HCT116 (cell line): ENCODE measurements at regions of chr2 and their contacts with region 1.

Region 1: GRCh38 chr2:10832203-10832936 is 19.8 kb upstream of the PDIA6 start:
- DNase-seq: peak; percentile 69
- ATAC-seq: peak; percentile 81
- H3K4me3 ChIP-seq: no peak overlapping the region
- H3K27ac ChIP-seq: no peak overlapping the region
- H3K4me1 ChIP-seq: peaks cover 0 to 23% of the 10 kb centered on the region in 2 experiments; a peak in 2 of 4 replicates
- H3K27me3 ChIP-seq: no peaks in the 10 kb centered on the region
- CTCF ChIP-seq: peak; percentile 91 to 98 (median 98)
- POLR2A ChIP-seq: no peak
- RAD21 ChIP-seq: peak; percentile 99

Region 2: GRCh38 chr2:10457911-10458604 is 374.3 kb before region 1 on chr2:
- CTCF ChIA-PET with region 1: no interaction called
- POLR2A ChIA-PET with region 1: no interaction called
- RAD21 ChIA-PET with region 1: no interaction called
- intact Hi-C with region 1: no loop called
- DNase-seq: no peak
- ATAC-seq: no peak
- H3K4me3 ChIP-seq: no peak overlapping the region
- H3K27ac ChIP-seq: no peak overlapping the region
- H3K4me1 ChIP-seq: peaks cover 0 to 5% of the 10 kb centered on the region in 2 experiments; a peak in 1 of 4 replicates
- H3K27me3 ChIP-seq: no peaks in the 10 kb centered on the region
- CTCF ChIP-seq: no peak
- POLR2A ChIP-seq: no peak
- RAD21 ChIP-seq: no peak

Region 3: GRCh38 chr2:10709290-10709939 is 123.0 kb before region 1 on chr2:
- CTCF ChIA-PET with region 1: interaction called, 5 read pairs
- POLR2A ChIA-PET with region 1: no interaction called
- RAD21 ChIA-PET with region 1: interaction called in 1 of 2 experiments, 4 read pairs
- intact Hi-C with region 1: loop called (anchors 1 kb)
- DNase-seq: peak; percentile 57
- ATAC-seq: peak; percentile 99
- H3K4me3 ChIP-seq: no peak overlapping the region
- H3K27ac ChIP-seq: no peak overlapping the region
- H3K4me1 ChIP-seq: peaks cover 3 to 11% of the 10 kb centered on the region in 2 experiments; a peak in 2 of 4 replicates
- H3K27me3 ChIP-seq: no peaks in the 10 kb centered on the region
- CTCF ChIP-seq: peak; percentile 71 to 76 (median 74)
- POLR2A ChIP-seq: no peak
- RAD21 ChIP-seq: peak; percentile 87

Region 4: DNA sequence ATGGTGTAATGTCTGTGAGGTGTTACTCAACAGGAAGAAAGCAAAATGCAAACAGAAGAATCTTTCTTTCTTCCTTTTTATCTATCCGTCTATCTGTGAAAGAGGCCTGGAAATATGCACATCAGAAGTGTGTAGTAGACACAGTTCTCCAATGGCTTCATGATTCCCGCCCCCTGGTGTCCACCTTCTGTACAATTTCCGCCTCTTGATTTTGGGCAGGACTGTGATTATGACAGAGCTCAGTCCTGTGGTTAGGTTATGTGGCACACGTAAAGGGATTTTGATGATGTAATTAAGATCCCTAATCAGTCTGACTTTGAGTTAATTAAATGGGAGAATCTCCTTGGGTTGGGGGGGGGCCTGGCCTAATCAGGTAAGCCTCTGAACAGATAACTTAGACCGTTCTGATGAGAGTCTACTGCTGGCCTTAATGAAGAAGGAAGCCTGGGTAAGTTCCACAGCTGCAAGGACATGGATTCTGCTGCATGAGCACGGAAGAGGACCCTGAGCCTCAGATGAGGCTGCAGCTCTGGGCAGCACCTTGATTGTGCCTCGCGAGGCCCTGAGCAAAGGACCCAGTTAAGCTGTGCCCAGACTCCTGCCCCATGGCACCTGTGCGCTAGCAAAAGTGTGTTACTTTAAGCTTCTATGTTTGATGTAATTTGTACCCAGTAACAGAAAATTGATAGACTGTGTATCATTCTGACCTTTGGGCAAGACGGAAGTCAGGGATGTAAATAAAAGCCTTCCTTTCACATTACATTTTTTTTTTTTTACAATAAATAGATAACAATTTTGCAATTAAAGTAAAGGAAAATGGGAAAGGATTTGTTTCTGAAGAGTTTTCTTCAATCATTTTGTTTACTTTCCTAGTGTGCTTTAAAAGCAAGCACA is 68.1 kb after region 1 on chr2:
- CTCF ChIA-PET with region 1: interaction called, 15 read pairs
- POLR2A ChIA-PET with region 1: no interaction called
- RAD21 ChIA-PET with region 1: interaction called in 1 of 2 experiments, 6 read pairs
- intact Hi-C with region 1: loop called (anchors 1 kb)
- DNase-seq: peak; percentile 68
- ATAC-seq: peak; percentile 95
- H3K4me3 ChIP-seq: no peak overlapping the region
- H3K27ac ChIP-seq: 0 out of 2 replicates have a peak overlapping the region, but pooled peaks have one; percentile 40
- H3K4me1 ChIP-seq: peaks cover 9 to 20% of the 10 kb centered on the region in 2 experiments; a peak in 3 of 4 replicates
- H3K27me3 ChIP-seq: no peaks in the 10 kb centered on the region
- CTCF ChIP-seq: peak; percentile 62 to 73 (median 69)
- POLR2A ChIP-seq: no peak
- RAD21 ChIP-seq: peak; percentile 53

Region 5: DNA sequence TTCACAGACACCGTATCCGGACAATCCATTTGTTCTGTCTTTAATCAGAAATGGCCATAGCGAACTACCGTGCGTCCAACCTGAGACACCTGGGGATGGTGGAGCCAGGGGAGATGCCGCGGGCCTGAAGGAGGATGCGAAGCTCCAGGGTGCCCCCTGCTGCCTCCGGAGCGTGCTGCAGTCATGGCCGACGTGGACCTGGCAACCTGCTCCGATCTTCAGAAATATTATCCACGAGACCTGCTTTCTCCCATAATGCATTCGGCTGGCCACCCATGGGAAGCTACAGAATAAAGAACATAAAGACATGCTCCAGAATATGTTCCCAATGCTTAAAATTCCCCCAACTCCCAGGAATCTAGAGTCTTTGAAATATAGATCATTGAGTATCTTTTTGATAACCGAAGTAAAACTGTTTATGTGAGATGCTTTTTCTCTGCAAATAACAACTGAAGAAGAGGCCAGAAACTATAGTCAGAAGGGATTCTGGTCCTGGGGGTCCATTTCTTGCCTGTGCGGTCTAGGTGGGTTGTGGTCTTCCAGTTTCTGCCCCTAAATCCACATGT is 292.2 kb after region 1 on chr2:
- CTCF ChIA-PET with region 1: interaction called, 173 read pairs
- POLR2A ChIA-PET with region 1: interaction called, 10 read pairs
- RAD21 ChIA-PET with region 1: interaction called, 13 read pairs
- intact Hi-C with region 1: loop called (anchors 1 kb)
- DNase-seq: peak; percentile 62
- ATAC-seq: peak; percentile 97
- H3K4me3 ChIP-seq: no peak overlapping the region
- H3K27ac ChIP-seq: no peak overlapping the region
- H3K4me1 ChIP-seq: peaks cover 4 to 25% of the 10 kb centered on the region in 2 experiments; a peak in 3 of 4 replicates
- H3K27me3 ChIP-seq: no peaks in the 10 kb centered on the region
- CTCF ChIP-seq: peak in 2 of 3 experiments; percentile 95 to 97; a peak in 4 of 6 replicates
- POLR2A ChIP-seq: no peak
- RAD21 ChIP-seq: no peak

Region 6: GRCh38 chr2:11446733-11447248 is 614.4 kb after region 1 on chr2:
- CTCF ChIA-PET with region 1: no interaction called
- POLR2A ChIA-PET with region 1: no interaction called
- RAD21 ChIA-PET with region 1: interaction called in 1 of 2 experiments, 5 read pairs
- intact Hi-C with region 1: loop called (anchors 10 kb)
- DNase-seq: peak; percentile 22
- ATAC-seq: peak; percentile 82
- H3K4me3 ChIP-seq: no peak overlapping the region
- H3K27ac ChIP-seq: no peak overlapping the region
- H3K4me1 ChIP-seq: no peaks in the 10 kb centered on the region
- H3K27me3 ChIP-seq: no peaks in the 10 kb centered on the region
- CTCF ChIP-seq: peak; percentile 59 to 88 (median 70); a peak in 5 of 6 replicates
- POLR2A ChIP-seq: no peak
- RAD21 ChIP-seq: peak; percentile 76